Endothelial cell of umbilical vein (primary cell): ENCODE measurements at regions of chr6 and their contacts with region 1.

Region 1: DNA sequence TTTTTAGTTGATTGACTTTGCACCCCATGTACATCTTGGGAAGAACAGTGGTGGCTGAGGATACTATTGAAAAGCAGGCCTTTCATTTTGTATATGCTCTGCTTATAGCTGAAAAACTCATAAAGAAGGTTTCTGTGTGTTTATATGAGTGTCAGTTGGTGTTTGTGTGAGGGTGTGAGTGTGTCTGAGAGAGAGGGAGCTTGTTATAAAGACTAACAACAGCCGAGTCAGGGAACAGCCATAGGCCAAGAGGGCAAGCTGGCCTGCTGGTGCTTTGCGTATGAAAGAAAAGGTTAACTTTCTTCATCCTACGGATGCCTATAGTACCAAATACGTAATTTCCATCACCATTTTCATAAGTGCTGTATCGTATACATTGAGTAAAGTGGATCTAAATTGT is 88.3 kb downstream of the MTHFD1L start:
- DNase-seq: no peak
- H3K4me3 ChIP-seq: no peak overlapping the region
- H3K27ac ChIP-seq: no peak overlapping the region
- H3K4me1 ChIP-seq: peaks cover 4% of the 10 kb centered on the region
- H3K27me3 ChIP-seq: no peaks in the 10 kb centered on the region
- CTCF ChIP-seq: no peak
- POLR2A ChIP-seq: no peak

Region 2: GRCh38 chr6:151338816-151339215 is 385.0 kb after region 1 on chr6:
- CTCF ChIA-PET with region 1: interaction called, 15 read pairs
- POLR2A ChIA-PET with region 1: no interaction called
- dilution Hi-C with region 1: no loop called
- intact Hi-C with region 1: loop called (anchors 2 kb)
- DNase-seq: no peak
- H3K4me3 ChIP-seq: no peak overlapping the region
- H3K27ac ChIP-seq: no peak overlapping the region
- H3K4me1 ChIP-seq: no peaks in the 10 kb centered on the region
- H3K27me3 ChIP-seq: no peaks in the 10 kb centered on the region
- CTCF ChIP-seq: no peak
- POLR2A ChIP-seq: no peak